Activated naive CD4-positive, alpha-beta T cell treated with anti-CD3 and anti-CD28 coated beads for 36 hours (primary cell): ENCODE measurements at regions of chr9 and their contacts with region 1.

Region 1: DNA sequence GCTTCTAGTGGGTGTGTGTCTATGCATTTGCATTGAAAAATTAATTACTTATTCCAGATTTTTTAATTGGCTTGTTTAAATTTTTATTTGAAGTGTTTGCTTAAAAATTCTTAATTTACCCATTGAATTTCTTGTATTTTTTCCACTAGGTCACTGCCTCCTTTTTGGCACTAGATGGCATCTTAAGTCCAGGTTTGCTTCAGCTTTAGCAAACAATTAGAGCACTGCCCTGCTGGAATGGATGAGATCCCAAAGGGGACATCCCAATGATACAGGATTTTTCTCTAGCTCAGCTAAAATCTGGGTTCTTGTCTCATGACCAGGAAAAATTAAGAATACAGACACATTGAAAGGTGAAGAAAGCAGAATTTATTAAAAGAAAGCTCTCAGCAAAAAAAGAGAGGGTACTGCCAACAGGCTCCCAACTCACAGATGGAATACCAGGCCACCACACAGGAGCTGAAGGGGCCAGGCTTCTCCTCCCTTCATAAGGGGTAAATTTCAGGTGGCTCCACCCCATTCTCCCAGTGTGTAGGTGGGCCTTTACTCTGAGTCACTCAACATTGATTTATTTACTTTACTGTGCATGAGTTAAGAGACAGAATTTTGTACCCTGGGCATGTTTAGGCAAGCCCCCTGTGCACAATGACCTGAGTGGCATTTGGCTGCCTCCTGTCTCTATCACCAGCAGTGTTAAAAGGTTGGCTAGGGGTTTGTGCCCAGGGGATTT is 532.4 kb downstream of the ANXA1 start:
- DNase-seq: no peak
- H3K4me3 Mint-ChIP-seq: no peak overlapping the region
- H3K27ac Mint-ChIP-seq: no peak overlapping the region
- H3K4me1 Mint-ChIP-seq: no peaks in the 10 kb centered on the region
- H3K27me3 Mint-ChIP-seq: no peaks in the 10 kb centered on the region

Region 2: GRCh38 chr9:73824671-73825070 is 140.6 kb after region 1 on chr9:
- CTCF ChIA-PET with region 1: no interaction called
- intact Hi-C with region 1: no loop called
- DNase-seq: no peak
- H3K4me3 Mint-ChIP-seq: no peak overlapping the region
- H3K27ac Mint-ChIP-seq: no peak overlapping the region
- H3K4me1 Mint-ChIP-seq: no peaks in the 10 kb centered on the region
- H3K27me3 Mint-ChIP-seq: no peaks in the 10 kb centered on the region

Region 3: GRCh38 chr9:74379718-74380117 is 695.7 kb after region 1 on chr9:
- CTCF ChIA-PET with region 1: no interaction called
- intact Hi-C with region 1: loop called (anchors 2 kb)
- DNase-seq: peak; percentile 44
- H3K4me3 Mint-ChIP-seq: no peak overlapping the region
- H3K27ac Mint-ChIP-seq: no peak overlapping the region
- H3K4me1 Mint-ChIP-seq: no peaks in the 10 kb centered on the region
- H3K27me3 Mint-ChIP-seq: no peaks in the 10 kb centered on the region

Region 4: GRCh38 chr9:74570879-74571512 is 887.0 kb after region 1 on chr9:
- CTCF ChIA-PET with region 1: no interaction called
- intact Hi-C with region 1: loop called (anchors 2 kb)
- DNase-seq: peak; percentile 43
- H3K4me3 Mint-ChIP-seq: no peak overlapping the region
- H3K27ac Mint-ChIP-seq: no peak overlapping the region
- H3K4me1 Mint-ChIP-seq: no peaks in the 10 kb centered on the region
- H3K27me3 Mint-ChIP-seq: peaks cover 2% of the 10 kb centered on the region